B cell (primary cell): ENCODE measurements at regions of chr2 and their contacts with region 1.

Region 1: DNA sequence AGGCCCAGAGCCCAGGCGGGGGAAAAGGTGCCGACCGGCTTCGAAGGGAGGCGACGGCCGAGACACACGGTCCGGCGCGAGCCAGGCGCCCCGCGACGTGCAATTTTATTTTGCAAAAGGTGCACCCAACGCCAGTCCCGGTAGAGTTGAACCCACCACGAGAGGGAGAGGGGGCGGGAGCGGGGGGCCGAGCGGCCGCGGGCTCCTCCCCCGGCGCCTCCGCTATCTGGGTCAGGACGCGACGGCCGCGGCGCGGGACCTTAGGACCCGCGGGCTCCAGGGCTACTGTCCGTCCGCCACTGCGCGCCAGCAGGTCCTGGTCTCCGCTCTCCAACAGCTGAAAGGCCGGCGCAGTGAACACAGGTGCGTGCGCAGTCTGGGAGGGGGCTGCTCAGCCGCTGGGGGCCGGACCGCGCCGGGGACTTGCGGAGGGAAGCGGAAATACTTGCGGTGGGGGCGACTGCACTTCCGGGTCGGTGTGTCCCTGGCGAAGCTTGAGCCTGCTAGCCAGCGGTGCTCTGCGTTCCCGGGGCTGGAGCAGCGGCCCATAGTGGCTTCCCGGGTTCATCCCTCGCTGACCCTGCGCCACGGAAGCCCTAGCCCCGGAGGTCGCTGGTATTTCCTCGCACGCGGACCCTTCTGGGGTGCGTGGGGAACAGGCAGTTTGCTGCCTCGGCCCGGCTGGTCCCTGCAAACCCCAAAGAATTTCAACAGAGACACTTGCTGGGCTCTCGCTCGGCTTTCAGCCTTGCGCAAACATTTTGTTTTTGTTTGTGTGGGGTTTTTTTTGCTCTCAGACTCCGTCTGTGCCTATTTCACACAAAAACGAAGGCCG is at the start of gene RMDN2:
- DNase-seq: peak; percentile 92
- ATAC-seq: peak; percentile 85
- H3K4me3 ChIP-seq: peak within 1 kb of the TSS; percentile 61 to 86 (median 81)
- H3K4me3 Mint-ChIP-seq: peak within 1 kb of the TSS; percentile 96
- H3K27ac ChIP-seq: peak within 1 kb of the TSS; percentile 84
- H3K27ac Mint-ChIP-seq: peak within 1 kb of the TSS; percentile 96
- H3K4me1 ChIP-seq: peaks cover 13 to 15% of the 10 kb centered on the region in 2 donors
- H3K4me1 Mint-ChIP-seq: peaks cover 34% of the 10 kb centered on the region
- H3K27me3 ChIP-seq: no peaks in the 10 kb centered on the region
- H3K27me3 Mint-ChIP-seq: peaks cover 7% of the 10 kb centered on the region
- CTCF ChIP-seq: peak; percentile 40
- total RNA-seq, gene RMDN2: 6.4 and 6.6 TPM in 2 replicates

Region 2: GRCh38 chr2:37110306-37111212 is 814.7 kb before region 1 on chr2:
- CTCF ChIA-PET with region 1: no interaction called
- POLR2A ChIA-PET with region 1: no interaction called
- intact Hi-C with region 1: no loop called
- DNase-seq: no peak
- ATAC-seq: no peak
- H3K4me3 ChIP-seq: no peak overlapping the region
- H3K4me3 Mint-ChIP-seq: no peak overlapping the region
- H3K27ac ChIP-seq: no peak overlapping the region
- H3K27ac Mint-ChIP-seq: no peak overlapping the region
- H3K4me1 ChIP-seq: no peaks in the 10 kb centered on the region
- H3K4me1 Mint-ChIP-seq: no peaks in the 10 kb centered on the region
- H3K27me3 ChIP-seq: no peaks in the 10 kb centered on the region
- H3K27me3 Mint-ChIP-seq: no peaks in the 10 kb centered on the region
- CTCF ChIP-seq: no peak

Region 3: DNA sequence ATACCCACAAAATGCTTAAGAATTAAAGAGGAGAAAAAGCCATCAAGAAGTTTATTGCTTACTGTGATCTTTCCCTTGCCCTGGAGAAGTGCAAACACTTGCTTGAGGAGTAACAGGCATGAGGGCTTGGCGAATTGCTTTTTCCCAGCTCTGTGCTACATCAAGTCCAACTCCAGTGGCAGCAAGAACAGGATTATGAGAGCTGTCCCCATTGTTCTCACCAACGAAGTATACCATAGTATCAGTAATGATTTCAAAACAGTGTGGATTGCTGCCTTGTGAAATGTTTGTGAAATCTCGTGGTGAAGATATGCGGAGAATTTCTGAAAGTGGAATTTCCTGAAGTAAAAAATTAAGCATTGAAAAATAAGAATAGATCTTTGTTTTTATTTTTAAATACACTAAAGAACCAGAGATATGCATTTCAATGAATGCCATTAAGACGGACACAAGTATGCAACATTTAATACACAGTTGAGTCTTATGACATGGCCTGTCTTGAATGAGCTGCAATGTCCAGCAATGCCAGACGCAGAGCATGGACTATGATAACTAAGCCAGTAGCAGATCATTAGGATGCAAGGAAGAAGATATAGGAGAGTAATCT is 650.8 kb before region 1 on chr2:
- CTCF ChIA-PET with region 1: no interaction called
- POLR2A ChIA-PET with region 1: interaction called, 12 read pairs
- intact Hi-C with region 1: no loop called
- DNase-seq: no peak
- ATAC-seq: no peak
- H3K4me3 ChIP-seq: no peak overlapping the region
- H3K4me3 Mint-ChIP-seq: no peak overlapping the region
- H3K27ac ChIP-seq: no peak overlapping the region
- H3K27ac Mint-ChIP-seq: no peak overlapping the region
- H3K4me1 ChIP-seq: no peaks in the 10 kb centered on the region
- H3K4me1 Mint-ChIP-seq: no peaks in the 10 kb centered on the region
- H3K27me3 ChIP-seq: no peaks in the 10 kb centered on the region
- H3K27me3 Mint-ChIP-seq: no peaks in the 10 kb centered on the region
- CTCF ChIP-seq: no peak